Caco-2 (cell line): ENCODE measurements at regions of chr3 and their contacts with region 1.

Region 1: GRCh38 chr3:159884661-159885402 is 103.8 kb upstream of the IL12A start:
- DNase-seq: peak in 1 of 2 experiments; percentile 34
- H3K4me3 ChIP-seq: no peak overlapping the region
- H3K4me3 Mint-ChIP-seq: no peak overlapping the region
- H3K27ac Mint-ChIP-seq: no peak overlapping the region
- H3K4me1 ChIP-seq: no peaks in the 10 kb centered on the region
- H3K4me1 Mint-ChIP-seq: no peaks in the 10 kb centered on the region
- H3K27me3 ChIP-seq: no peaks in the 10 kb centered on the region
- H3K27me3 Mint-ChIP-seq: no peaks in the 10 kb centered on the region
- CTCF ChIP-seq: peak; percentile 47 to 51

Region 2: DNA sequence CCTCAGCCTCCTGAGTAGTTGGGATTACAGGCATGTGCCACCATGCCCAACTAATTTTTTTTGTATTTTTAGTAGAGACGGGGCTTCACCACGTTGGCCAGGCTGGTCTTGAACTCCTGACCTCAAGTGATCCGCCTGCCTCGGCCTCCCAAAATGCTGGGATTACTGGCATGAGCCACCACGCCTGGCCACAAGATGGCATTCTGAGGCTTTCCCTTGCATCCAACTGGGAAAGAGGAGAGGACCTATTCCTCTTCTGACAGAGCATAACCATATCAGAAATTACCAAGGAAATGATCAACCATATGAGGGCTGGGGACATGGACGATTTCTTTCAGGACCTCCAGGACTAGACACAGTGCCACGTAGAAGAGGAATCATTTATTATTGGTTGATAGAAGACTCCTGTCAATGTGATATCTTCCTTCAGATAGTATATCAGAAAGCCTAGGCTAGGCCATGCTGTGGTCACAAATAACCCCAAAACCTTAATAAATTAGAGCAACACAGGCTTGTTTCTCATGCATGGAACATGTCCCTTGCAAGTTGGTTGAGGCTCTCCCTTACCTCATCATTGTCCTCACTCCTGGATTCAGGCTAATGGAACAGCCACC is 268.5 kb before region 1 on chr3:
- CTCF ChIA-PET with region 1: no interaction called
- POLR2A ChIA-PET with region 1: no interaction called
- intact Hi-C with region 1: loop called (anchors 1 kb)
- DNase-seq: peak; percentile 72 to 73
- H3K4me3 ChIP-seq: no peak overlapping the region
- H3K4me3 Mint-ChIP-seq: no peak overlapping the region
- H3K27ac Mint-ChIP-seq: no peak overlapping the region
- H3K4me1 ChIP-seq: peaks cover 6% of the 10 kb centered on the region
- H3K4me1 Mint-ChIP-seq: no peaks in the 10 kb centered on the region
- H3K27me3 ChIP-seq: no peaks in the 10 kb centered on the region
- H3K27me3 Mint-ChIP-seq: no peaks in the 10 kb centered on the region
- CTCF ChIP-seq: peak; percentile 51 to 65

Region 3: DNA sequence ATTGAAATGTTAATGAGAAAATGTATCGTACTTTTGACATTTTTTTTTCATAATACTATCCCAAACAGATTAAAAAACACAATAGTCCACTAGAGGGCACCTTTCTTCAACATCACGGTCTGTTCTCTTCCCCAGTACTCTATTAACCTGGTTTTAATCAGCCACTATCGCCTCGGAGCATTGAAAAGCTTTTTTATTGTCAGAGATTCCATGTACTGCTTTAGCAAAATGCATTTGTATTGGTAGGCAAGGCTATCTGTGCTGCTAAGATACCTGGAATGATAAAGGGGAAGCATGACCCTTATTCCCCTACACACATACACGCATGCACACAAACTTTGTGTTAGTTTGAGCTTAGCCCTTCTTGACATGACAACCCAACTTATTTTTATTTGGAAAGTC is 56.3 kb before region 1 on chr3:
- CTCF ChIA-PET with region 1: no interaction called
- POLR2A ChIA-PET with region 1: no interaction called
- intact Hi-C with region 1: loop called (anchors 5 kb)
- DNase-seq: peak in 1 of 2 experiments; percentile 32
- H3K4me3 ChIP-seq: no peak overlapping the region
- H3K4me3 Mint-ChIP-seq: no peak overlapping the region
- H3K27ac Mint-ChIP-seq: no peak overlapping the region
- H3K4me1 ChIP-seq: peaks cover 15% of the 10 kb centered on the region
- H3K4me1 Mint-ChIP-seq: no peaks in the 10 kb centered on the region
- H3K27me3 ChIP-seq: no peaks in the 10 kb centered on the region
- H3K27me3 Mint-ChIP-seq: no peaks in the 10 kb centered on the region
- CTCF ChIP-seq: peak; percentile 37 to 56

Region 4: GRCh38 chr3:159982442-159982974 is 97.7 kb after region 1 on chr3:
- CTCF ChIA-PET with region 1: interaction called, 15 read pairs
- POLR2A ChIA-PET with region 1: no interaction called
- intact Hi-C with region 1: loop called (anchors 5 kb)
- DNase-seq: no peak
- H3K4me3 ChIP-seq: no peak overlapping the region
- H3K4me3 Mint-ChIP-seq: no peak overlapping the region
- H3K27ac Mint-ChIP-seq: no peak overlapping the region
- H3K4me1 ChIP-seq: peaks cover 6% of the 10 kb centered on the region; the same call in 1 of the 2 replicates
- H3K4me1 Mint-ChIP-seq: peaks cover 8% of the 10 kb centered on the region
- H3K27me3 ChIP-seq: no peaks in the 10 kb centered on the region
- H3K27me3 Mint-ChIP-seq: no peaks in the 10 kb centered on the region
- CTCF ChIP-seq: peak in 1 of 2 experiments; percentile 29

Region 5: DNA sequence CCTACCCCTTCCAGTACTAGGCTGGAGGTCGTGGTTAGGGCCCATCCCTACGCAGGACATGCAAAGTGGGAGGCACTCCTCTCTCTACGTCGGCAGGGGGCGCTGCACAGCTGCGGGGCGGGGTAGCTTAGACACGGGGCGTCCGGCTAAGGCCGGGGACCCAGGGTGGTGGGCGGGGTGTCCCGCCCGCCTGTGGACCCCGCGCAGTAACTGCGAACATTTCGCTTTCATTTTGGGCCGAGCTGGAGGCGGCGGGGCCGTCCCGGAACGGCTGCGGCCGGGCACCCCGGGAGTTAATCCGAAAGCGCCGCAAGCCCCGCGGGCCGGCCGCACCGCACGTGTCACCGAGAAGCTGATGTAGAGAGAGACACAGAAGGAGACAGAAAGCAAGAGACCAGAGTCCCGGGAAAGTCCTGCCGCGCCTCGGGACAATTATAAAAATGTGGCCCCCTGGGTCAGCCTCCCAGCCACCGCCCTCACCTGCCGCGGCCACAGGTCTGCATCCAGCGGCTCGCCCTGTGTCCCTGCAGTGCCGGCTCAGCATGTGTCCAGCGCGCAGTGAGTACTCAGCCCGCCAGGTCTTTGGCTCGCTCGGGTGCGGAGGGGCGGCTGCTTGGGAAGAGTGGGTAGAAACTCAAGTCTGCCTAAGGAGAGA is 103.9 kb after region 1 on chr3 and contains the start of gene IL12A:
- CTCF ChIA-PET with region 1: interaction called, 5 read pairs
- POLR2A ChIA-PET with region 1: no interaction called
- intact Hi-C with region 1: loop called (anchors 5 kb)
- DNase-seq: peak; percentile 80 to 86
- H3K4me3 ChIP-seq: peak within 1 kb of the TSS; percentile 55
- H3K4me3 Mint-ChIP-seq: peak within 1 kb of the TSS; percentile 83
- H3K27ac Mint-ChIP-seq: no peak within 1 kb of the TSS
- H3K4me1 ChIP-seq: peaks cover 11% of the 10 kb centered on the region
- H3K4me1 Mint-ChIP-seq: peaks cover 18% of the 10 kb centered on the region
- H3K27me3 ChIP-seq: no peaks in the 10 kb centered on the region
- H3K27me3 Mint-ChIP-seq: no peaks in the 10 kb centered on the region
- CTCF ChIP-seq: peak; percentile 91
- total RNA-seq, gene IL12A: 0.60 and 0.95 TPM in 2 replicates